Dorsolateral prefrontal cortex (tissue), 120 donors: ENCODE measurements at regions of chr17 and their contacts with region 1.

Region 1: GRCh38 chr17:17416007-17416399 is 60.8 kb upstream of the MED9 start:
- DNase-seq: peak in 1 of 10 donors; percentile 52
- H3K4me3 ChIP-seq: no peak overlapping the region
- H3K27ac ChIP-seq: peak overlapping the region in 57 of 59 donors; percentile 27 to 92 (median 73)
- H3K27me3 ChIP-seq: peaks cover 0 to 13% (median 0%) of the 10 kb centered on the region in 45 donors
- CTCF ChIP-seq: no peak

Region 2: DNA sequence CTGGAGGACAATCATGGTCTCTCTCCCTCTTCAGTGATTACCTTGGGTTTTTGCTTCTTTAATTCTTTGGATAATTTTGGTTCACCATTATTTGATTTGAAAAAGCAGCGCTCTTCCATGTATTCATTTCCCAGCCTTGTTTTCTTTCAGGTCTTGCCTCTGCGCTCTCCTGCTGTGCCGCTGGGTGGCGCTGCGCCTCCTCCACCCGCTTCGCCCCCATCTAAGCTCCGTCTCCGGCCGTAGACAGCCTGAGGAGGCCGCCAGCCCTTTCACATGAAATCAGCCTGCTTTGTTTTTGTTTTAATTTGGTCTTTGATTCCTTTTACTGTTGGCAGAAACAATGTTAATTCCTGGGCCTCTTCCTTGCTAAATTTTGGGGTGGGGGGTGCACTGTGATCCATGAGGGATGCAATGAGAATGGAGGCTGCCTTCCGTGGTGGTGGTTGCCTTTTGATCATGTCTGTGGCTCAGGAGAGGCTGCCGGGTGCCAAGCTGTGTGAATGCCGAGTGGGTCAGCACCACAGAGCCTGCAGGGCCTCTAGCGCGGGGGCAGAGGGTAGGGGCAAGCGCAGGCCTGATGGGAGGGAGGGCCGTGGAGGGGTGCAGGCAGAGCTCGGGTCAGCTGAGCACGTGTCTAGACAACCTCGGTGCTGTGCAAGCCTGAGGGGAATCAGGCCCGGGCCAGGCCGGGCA is 274.0 kb before region 1 on chr17:
- intact Hi-C with region 1: no loop called
- DNase-seq: peak; percentile 67 to 86 (median 77)
- H3K4me3 ChIP-seq: peak overlapping the region in 2 of 59 donors; percentile 3 to 4
- H3K27ac ChIP-seq: peak overlapping the region in 58 of 59 donors; percentile 21 to 90 (median 77)
- H3K27me3 ChIP-seq: no peaks in the 10 kb centered on the region
- CTCF ChIP-seq: peak; percentile 78 to 99 (median 92)

Region 3: DNA sequence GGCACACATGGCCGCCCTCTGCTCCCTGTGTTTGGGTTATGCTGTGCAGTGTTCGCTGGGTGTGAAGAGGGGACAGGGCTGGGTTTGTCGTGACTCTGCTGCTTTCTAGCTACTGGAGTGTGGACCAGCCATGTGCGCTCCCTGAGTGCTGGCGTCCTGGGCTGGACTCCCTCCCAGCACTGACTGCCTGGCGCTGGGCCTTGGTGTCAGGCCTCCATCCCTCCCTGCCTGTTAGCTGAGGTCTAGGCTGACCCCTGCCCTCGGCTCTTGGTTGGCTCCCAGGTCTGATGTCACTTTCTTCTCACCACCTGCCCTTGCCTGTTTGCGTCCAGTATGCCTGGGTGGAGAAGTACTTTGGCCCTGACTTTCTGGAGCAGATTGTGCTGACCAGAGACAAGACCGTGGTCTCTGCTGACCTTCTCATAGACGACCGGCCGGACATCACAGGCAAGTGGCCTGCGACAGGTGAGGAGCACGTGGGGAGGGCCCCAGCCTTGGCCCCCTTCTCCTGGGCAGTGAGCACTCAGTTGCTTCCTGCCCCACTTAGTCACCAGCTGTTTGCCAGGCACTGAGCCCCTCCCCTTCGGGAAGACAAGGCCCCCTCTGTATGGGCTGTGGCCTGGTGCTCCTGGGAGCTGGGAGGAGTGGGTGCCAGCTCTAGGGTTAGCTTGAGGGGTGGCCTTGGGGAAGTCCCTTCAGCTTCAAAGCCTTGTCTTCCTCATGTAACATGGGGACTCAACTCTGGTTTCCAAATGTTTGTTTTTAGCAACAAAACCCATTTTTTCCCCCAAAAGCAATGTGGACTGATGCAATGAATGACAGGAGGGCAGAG is 71.3 kb before region 1 on chr17:
- intact Hi-C with region 1: no loop called
- DNase-seq: peak in 5 of 10 donors; percentile 21 to 38 (median 28)
- H3K4me3 ChIP-seq: no peak overlapping the region
- H3K27ac ChIP-seq: no peak overlapping the region
- H3K27me3 ChIP-seq: no peaks in the 10 kb centered on the region
- CTCF ChIP-seq: no peak

Region 4: DNA sequence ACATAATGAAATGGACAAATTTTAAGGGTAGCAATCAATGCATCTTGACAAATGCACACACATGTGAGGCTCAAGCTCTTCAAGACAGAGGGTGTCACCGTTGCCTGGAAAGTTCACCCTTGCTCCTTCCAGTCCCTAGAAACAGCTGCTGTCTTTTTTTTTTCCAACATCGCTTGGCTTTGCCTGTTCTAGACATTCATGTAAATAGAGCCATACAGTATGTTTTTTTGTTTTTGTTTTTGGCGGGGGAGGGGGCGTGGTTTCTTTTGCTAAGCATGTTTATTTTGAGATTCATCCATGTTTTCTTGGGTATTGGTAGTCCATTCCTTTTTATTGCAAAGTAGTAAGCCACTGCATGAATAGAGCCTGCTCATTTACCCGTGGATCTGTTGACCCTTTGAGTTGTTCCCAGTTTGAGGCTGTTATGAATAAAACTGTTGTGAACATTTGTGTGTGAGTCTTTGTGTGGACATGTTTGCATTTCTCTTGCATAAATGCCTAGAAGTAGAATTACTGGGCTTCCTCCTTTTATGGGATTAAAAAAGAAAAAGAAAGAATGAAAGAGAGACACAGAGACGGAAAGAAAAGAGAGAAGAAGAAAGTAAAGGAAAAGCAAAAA is 34.4 kb before region 1 on chr17:
- intact Hi-C with region 1: loop called in 1 of 2 experiments (anchors 2 kb)
- DNase-seq: no peak
- H3K4me3 ChIP-seq: peak overlapping the region in 1 of 59 donors; percentile 10
- H3K27ac ChIP-seq: peak overlapping the region in 2 of 59 donors; percentile 13 to 40
- H3K27me3 ChIP-seq: no peaks in the 10 kb centered on the region
- CTCF ChIP-seq: no peak

Region 5: DNA sequence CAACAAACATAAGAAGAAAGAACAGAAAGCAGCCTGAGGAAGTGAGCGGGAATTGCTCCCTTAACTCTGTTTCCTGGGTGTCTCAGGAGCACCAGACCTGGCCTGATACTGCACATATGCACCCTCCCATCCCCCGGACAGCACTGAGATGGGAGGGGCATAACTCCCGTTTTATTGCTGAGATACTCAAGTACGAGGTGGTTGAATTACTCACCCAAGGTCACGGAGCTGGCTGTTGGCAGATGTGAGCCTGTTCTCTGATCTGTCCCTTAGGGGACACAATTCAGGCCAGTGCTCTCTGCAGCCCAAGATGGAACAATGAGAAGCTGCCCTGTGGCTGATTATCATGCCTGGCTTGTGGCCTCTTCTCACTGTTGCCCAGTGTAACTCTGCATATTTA is 51.7 kb after region 1 on chr17:
- intact Hi-C with region 1: loop called in 1 of 2 experiments (anchors 5 kb)
- DNase-seq: no peak
- H3K4me3 ChIP-seq: no peak overlapping the region
- H3K27ac ChIP-seq: peak overlapping the region in 53 of 59 donors; percentile 2 to 88 (median 71)
- H3K27me3 ChIP-seq: peaks cover 0 to 14% (median 0%) of the 10 kb centered on the region in 45 donors
- CTCF ChIP-seq: no peak

Region 6: DNA sequence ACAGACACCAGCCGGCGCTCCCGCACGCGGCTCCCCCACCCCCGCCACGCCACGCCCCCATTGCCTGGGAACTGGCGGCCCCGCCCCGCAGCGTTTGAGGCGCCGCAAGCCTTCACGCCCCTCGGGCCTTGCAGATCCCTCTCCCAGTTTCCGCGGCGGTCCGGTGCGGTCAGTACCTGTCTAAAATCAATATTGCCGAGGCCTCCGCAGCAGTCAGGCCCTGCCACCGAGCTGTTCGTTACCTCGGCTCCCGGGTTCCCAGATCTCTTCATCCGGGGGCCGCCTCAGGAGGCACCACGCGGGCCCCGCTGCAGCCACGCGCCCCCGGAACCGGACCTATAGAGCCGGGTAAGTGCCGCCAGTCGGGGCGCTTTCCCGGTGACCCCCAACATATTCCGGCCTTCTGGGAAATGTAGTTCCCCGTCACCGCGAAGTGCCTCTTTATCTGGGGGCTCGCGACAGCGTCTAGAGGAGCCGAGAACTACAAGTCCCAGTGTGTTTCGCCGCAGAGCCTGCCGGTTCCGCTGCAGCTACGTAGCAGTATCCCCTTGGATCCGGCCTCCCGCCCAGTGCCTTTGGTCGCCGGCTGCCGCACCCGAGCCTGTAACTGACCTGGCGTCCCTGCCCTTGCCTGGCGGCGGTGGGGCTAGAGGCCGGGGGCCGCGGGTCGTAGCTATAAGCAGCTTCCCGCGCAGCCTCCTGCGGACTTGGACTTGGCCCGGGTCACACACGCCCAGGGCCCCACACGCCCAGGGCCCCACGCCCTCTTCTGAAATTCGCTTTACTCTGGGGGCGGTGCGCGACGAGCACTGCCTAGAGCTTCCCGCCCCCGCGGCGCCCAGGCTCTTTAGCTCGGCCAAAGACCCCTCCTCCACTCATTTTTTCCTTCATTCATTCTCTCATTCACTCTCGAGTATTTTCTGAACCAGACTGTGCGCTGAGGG is 175.6 kb after region 1 on chr17 and contains the start of gene PEMT:
- intact Hi-C with region 1: loop called in 1 of 2 experiments (anchors 2 kb)
- DNase-seq: peak; percentile 95 to 99 (median 98)
- H3K4me3 ChIP-seq: peak within 1 kb of the TSS; percentile 70 to 100 (median 95)
- H3K27ac ChIP-seq: peak within 1 kb of the TSS in 58 of 59 donors; percentile 55 to 95 (median 88)
- H3K27me3 ChIP-seq: no peaks in the 10 kb centered on the region
- CTCF ChIP-seq: peak in 31 of 56 donors; percentile 4 to 61 (median 37)
- total RNA-seq, gene PEMT: 11.4 to 41.9 (median 24.7) TPM